Posterior vena cava (tissue), 2 donors: ENCODE measurements at regions of chr7 and their contacts with region 1.

Region 1: GRCh38 chr7:109190766-109191398 is 621.2 kb downstream of the DNAJB9 start:
- DNase-seq: no peak

Region 2: GRCh38 chr7:110142939-110143526 is 952.2 kb after region 1 on chr7:
- intact Hi-C with region 1: loop called in 1 of 2 experiments (anchors 5 kb)
- DNase-seq: no peak